A549 (cell line): ENCODE measurements at regions of chr1 and their contacts with region 1.

Region 1: GRCh38 chr1:39258146-39258924 is 53.8 kb downstream of the MACF1 start:
- DNase-seq: peak; percentile 64 to 80
- ATAC-seq: peak; percentile 90 to 94
- H3K4me3 ChIP-seq: no peak overlapping the region
- H3K27ac ChIP-seq: peak overlapping the region in 1 of 2 experiments; percentile 33; a peak in 1 of 6 replicates
- H3K4me1 ChIP-seq: 0 out of 3 replicates have a peak, but pooled peaks cover 6% of the 10 kb centered on the region
- CTCF ChIP-seq: peak; percentile 84
- EP300 ChIP-seq: no peak
- POLR2A ChIP-seq: no peak
- RAD21 ChIP-seq: peak; percentile 91 to 93

Region 2: DNA sequence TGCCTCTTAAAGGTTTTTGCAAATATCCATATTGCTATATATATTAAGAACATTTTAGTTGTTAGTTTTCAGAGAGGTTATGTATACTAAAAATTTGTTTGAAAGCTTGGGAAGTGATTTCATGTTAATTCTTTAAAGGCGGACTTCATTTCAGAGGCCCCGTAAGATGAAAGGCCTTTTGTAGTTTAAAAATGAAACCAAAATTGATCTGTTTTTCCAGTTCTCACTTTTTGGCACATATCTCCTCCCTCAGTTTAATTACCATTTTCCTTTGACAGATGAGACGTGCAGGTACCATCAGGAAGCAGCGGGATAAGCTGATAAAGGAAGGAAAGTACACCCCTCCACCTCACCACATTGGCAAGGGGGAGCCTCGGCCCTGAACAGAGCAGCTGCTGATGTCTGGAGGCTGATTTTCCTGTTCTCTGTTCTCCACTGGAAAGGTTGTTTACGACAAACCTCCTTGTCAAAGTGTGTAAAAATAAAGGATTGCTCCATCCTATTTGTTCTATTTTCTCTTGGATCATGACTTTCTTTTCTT is 224.2 kb before region 1 on chr1:
- CTCF ChIA-PET with region 1: no interaction called
- POLR2A ChIA-PET with region 1: no interaction called
- DNase-seq: no peak
- ATAC-seq: no peak
- H3K4me3 ChIP-seq: no peak overlapping the region
- H3K27ac ChIP-seq: no peak overlapping the region
- H3K4me1 ChIP-seq: no peaks in the 10 kb centered on the region
- CTCF ChIP-seq: no peak
- EP300 ChIP-seq: no peak
- POLR2A ChIP-seq: no peak
- RAD21 ChIP-seq: no peak

Region 3: DNA sequence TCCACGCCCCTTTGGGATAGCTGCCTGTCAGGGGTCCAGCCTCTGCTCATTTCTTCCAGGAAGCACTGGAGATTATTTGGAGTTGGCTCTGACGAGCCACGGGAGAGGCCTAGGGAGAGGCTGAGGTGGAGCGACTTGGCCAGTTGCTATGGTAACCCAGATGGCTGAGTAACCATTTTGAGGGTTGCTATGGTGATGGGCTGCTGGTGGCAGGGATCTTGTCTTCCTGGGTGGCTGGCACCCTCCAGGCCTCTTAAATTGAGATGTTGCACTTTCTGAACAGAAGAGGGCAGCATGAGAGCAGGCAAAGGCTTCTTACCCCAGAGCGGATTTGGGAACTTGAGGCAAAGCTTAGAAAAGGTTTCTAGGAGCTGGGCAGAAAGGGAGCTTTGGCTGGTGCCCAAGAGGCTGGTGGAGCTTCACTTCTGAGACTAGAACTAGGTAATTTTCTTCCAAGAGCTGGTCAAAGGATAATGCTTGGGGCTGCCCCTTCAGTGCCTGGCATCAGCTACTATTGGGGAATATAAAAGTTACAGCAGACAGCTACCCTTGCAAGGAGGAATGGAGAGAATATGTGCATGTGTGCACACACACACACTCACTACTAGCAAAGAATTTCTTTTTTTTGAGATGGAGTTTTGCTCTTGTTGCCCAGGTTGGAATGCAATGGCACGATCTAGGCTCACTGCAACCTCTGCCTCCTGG is 159.6 kb before region 1 on chr1:
- CTCF ChIA-PET with region 1: interaction called, 60 read pairs
- POLR2A ChIA-PET with region 1: no interaction called
- DNase-seq: peak; percentile 93
- ATAC-seq: peak; percentile 82 to 87
- H3K4me3 ChIP-seq: no peak overlapping the region
- H3K27ac ChIP-seq: peak overlapping the region in 1 of 2 experiments; percentile 38; a peak in 1 of 6 replicates
- H3K4me1 ChIP-seq: peaks cover 17% of the 10 kb centered on the region
- CTCF ChIP-seq: peak; percentile 76
- EP300 ChIP-seq: no peak
- POLR2A ChIP-seq: no peak
- RAD21 ChIP-seq: peak; percentile 85 to 92

Region 4: DNA sequence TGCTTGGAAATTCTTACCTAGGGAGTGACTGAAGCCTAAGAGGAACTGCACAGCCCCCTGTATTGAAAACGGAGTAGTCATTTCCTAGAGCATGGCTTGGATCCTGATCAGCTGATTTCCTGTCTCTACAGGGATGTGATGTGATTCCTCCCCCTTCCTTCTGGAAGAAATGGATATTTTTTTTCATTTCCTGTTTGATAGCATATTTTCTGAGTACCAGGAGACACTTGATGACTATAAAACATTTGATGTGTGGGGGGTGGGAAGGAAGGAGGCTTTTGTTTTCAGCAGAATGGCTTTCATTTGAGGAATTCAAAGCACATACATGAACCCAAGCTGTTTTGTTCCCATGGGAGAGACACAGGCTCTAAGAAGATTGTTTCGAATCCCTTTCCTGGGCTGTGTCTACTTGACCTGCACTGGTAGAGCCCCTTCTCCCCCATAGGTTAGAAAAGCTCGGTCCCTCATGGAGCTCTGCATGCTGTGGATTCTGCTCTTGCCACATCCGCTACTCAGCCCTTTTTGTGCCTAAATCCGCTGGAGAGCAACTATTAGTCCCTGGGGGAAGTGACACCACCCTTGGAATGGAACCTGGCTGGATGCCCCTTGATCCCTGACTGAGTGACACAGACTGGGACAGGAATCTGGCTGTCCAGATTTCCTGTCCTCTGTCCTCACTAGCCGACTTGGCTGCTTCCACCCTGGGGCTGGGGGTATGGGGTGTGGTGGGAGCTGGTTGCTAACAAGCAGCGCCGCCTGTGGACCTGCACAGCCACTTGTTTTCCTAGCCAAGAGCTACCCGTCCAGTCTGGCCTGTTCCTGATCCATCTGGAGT is 125.6 kb before region 1 on chr1:
- CTCF ChIA-PET with region 1: interaction called, 18 read pairs
- POLR2A ChIA-PET with region 1: no interaction called
- DNase-seq: peak; percentile 22 to 55
- ATAC-seq: peak; percentile 55 to 80; a peak in 5 of 6 replicates
- H3K4me3 ChIP-seq: no peak overlapping the region
- H3K27ac ChIP-seq: peak overlapping the region; percentile 65 to 82
- H3K4me1 ChIP-seq: peaks cover 64% of the 10 kb centered on the region
- CTCF ChIP-seq: no peak
- EP300 ChIP-seq: no peak
- POLR2A ChIP-seq: no peak
- RAD21 ChIP-seq: no peak

Region 5: DNA sequence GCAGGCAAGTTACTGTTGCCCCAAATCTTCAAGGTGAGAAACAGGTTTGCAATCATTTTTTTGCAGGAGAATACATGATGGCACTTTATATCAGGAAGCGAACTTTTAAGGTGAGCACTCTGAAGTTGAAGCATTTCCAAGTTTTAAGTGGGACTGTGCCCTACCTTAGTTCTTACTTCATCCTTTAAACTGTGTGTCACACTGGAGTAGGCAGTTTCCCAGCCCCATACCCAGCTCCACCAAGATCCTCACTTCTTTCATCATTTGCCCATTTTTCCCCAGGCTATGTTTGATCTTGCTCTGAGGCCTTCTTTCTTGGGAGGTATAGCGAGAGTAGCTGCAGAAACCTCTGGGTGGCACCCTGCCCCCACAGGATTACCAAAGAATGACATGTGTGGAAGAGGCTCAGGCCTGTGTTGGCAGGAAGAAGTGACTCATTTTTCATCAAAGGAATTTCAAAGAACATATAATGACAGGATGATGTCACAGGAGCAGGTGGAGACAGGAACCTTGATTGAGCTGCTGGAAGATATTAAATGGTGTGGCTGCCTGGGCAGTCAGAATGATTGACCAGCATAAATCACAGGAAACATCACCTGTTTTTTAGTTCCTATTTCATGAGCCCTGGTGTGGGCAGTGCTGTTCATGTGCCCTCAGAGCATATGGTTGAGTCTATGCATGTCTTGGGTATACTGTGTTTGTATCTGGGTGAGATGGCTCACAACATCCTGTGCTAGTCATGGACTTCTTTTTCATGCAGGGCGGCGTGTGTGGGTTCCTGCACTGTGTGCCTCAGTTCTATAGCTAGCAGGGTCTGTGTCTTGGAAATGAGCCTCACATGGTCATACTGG is 74.6 kb before region 1 on chr1:
- CTCF ChIA-PET with region 1: interaction called, 22 read pairs
- POLR2A ChIA-PET with region 1: no interaction called
- DNase-seq: peak; percentile 60 to 91
- ATAC-seq: peak; percentile 77 to 87
- H3K4me3 ChIP-seq: no peak overlapping the region
- H3K27ac ChIP-seq: peak overlapping the region; percentile 86 to 94
- H3K4me1 ChIP-seq: peaks cover 78% of the 10 kb centered on the region
- CTCF ChIP-seq: peak; percentile 27
- EP300 ChIP-seq: peak; percentile 93 to 95; a peak in 4 of 5 replicates
- POLR2A ChIP-seq: no peak
- RAD21 ChIP-seq: peak; percentile 54 to 63

Region 6: GRCh38 chr1:39196244-39197215 is 61.8 kb before region 1 on chr1:
- CTCF ChIA-PET with region 1: interaction called, 95 read pairs
- POLR2A ChIA-PET with region 1: interaction called, 7 read pairs
- DNase-seq: no peak
- ATAC-seq: no peak
- H3K4me3 ChIP-seq: no peak overlapping the region
- H3K27ac ChIP-seq: peak overlapping the region in 1 of 2 experiments; percentile 94; a peak in 3 of 6 replicates
- H3K4me1 ChIP-seq: peaks cover 63% of the 10 kb centered on the region
- CTCF ChIP-seq: no peak
- EP300 ChIP-seq: no peak
- POLR2A ChIP-seq: no peak
- RAD21 ChIP-seq: no peak

Region 7: DNA sequence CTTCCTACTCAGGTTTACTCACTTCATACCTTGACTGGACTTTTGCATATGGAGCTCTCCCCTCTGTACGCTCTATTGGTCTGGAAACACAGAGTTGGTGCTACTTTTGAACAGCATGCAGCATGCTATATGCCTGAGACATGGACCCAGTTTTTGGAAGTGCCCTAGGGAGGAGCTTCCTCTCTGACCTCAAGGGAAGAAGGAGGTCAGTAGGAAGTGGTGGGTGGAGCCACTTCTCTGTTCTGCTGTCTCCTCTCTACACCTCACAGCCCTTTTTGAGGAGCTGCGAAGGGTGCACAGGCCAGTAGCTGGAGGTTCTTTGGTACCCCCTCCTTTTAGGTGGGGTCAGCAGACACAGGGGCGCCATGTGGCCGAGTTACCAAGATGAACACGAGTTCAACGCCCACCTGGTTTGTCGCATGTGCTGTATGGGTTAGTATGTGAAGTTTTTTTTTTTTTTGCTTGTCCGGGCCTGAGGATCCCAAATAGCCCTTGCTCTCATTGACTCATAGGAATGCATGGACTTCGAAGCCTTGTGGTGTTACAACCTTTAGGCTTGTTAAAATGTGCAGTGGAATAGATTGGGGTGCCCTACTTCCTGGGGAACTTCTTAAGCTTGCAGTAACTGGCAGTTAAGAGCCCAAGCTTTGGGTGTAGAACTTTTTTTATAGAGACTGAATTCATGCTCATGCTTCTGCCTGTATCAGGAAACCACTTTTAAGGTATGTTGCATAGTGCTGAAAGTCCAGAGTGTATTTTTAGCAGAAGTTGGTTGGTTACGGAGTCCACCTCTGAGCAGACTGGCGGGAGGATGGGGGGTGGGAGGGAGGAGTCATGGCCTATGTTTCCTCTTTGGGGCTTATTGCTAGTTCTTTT is 43.1 kb before region 1 on chr1:
- CTCF ChIA-PET with region 1: interaction called, 19 read pairs
- POLR2A ChIA-PET with region 1: no interaction called
- DNase-seq: no peak
- ATAC-seq: peak in 1 of 2 experiments; percentile 36; a peak in 3 of 6 replicates
- H3K4me3 ChIP-seq: no peak overlapping the region
- H3K27ac ChIP-seq: peak overlapping the region in 1 of 2 experiments; percentile 30; a peak in 2 of 6 replicates
- H3K4me1 ChIP-seq: peaks cover 49% of the 10 kb centered on the region
- CTCF ChIP-seq: no peak
- EP300 ChIP-seq: no peak
- POLR2A ChIP-seq: no peak
- RAD21 ChIP-seq: no peak